Posterior cingulate gyrus (tissue), 11 donors: ENCODE measurements at regions of chr14 and their contacts with region 1.

Region 1: GRCh38 chr14:22099942-22100763 is 426.5 kb upstream of the OR4E1 start:
- DNase-seq: peak in 9 of 10 donors; percentile 9 to 88 (median 49)

Region 2: DNA sequence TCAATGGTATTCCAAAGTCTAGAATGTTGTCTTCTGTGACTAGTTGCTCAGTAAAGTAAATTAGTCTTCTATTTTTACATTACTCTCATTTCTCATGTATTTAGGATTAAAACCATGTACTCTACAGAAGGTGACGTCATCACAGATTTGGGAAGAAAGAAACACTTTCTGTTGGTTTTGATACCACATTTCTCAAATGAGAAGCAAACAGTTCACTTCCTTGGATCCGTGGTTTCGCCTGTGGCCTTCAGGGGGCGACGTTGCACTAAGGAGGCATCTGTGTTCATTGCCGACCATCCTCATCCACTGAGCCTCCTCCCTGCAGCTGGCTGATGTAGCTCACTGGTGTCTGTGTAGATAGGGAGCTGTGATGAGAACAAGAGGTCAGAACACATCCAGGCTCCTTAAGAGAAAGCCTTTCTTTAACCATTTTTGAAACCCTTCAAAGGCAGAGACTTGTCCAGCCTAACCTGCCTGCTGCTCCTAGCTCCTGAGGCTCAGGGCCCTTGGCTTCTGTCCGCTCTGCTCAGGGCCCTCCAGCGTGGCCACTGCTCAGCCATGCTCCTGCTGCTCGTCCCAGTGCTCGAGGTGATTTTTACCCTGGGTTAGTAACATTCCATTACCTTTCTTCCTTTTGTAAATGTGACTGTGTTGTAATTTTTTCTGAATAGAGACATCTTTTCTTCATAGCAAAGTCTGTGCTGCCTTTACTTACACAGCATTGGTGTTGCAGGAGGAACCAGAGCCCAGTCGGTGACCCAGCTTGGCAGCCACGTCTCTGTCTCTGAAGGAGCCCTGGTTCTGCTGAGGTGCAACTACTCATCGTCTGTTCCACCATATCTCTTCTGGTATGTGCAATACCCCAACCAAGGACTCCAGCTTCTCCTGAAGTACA is 205.9 kb before region 1 on chr14:
- intact Hi-C with region 1: no loop called
- DNase-seq: peak in 4 of 10 donors; percentile 36 to 72 (median 49)

Region 3: DNA sequence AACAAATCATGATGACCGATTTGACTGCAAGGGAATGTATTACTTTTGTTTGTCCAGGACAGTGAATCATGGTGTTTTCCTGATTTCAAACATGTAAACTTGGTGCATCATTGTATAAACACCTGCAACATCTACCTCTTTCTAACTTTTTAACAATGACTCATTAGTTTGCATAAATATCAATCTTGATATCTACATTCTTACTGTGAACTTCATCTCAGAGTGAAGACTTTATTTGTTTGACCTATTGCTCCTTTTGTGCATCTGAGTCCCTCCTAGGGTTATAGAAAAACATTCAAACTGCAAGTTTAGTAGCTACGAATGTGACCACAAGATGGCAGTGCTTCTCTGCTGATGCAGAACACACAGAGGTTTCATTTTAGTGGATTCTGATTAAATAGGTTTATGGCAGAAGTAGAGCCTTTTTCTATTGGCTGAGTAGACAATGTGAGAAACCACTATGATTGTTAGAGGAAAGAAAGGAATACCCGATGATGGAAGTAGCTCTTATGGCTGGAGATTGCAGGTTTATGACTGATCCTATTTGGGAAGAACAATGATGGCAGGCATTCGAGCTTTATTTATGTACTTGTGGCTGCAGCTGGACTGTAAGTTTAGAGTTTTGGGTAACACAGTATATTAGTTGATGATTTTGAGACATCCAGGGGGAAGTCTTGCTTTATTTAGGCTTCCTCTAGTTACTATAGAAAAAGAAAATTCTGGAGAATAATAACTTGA is 182.3 kb before region 1 on chr14:
- intact Hi-C with region 1: loop called (anchors 10 kb)
- DNase-seq: peak in 4 of 10 donors; percentile 33 to 62 (median 44)

Region 4: GRCh38 chr14:21940887-21941856 is 159.0 kb before region 1 on chr14:
- intact Hi-C with region 1: no loop called
- DNase-seq: no peak

Region 5: DNA sequence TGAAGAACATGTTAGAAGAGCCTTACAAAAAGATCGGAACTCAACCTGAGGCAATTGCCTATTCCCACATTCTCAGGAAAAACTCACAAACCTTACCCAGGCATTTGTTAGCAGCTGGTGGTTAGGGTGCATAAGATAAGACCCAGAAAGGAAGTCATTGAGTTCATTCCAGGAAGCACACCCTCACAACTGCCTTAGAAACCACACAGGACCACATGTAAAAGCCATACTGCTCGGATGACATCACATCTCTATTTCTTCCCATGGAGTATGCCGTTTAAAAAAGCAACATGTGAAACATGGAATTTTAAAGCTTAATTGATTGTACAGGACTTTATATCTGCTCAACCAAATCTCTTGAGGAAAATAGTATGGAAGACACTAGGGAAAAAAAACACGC is 77.7 kb after region 1 on chr14:
- intact Hi-C with region 1: no loop called
- DNase-seq: no peak